H1 (cell line): ENCODE measurements at regions of chr16 and their contacts with region 1.

Region 1: DNA sequence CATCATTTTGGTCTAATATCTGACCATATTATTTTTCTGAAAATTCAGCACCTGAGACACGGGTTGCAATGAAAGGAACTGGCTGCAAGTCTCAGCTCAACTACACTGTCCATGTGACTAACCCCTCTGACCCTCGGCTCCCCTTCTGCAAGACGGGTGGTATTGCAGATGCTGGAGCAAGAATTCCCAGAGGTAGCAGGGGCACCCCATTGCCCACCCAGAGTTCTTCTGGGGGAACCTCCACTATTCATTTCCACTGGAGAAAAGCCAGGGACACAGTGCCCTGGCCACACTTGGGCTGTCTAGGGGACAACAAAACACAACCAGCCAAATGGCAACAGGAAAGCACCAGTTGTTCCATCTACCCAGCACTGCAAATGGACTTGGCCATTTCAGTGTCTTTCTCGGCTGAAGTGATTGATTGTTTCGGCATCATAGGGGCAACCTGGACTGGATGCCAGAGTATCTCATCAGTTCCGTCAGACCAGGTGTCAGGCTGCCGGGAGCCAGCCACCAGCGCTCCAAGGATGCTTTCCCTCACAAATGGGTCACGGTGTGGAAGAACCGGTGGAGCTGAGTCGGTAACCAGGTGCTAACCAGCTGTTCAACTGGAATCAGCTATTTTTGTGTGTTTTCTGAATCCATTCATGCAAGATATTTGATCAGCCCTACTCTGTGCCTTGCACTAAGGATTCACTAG is 58.1 kb downstream of the C16orf78 start:
- DNase-seq: no peak
- H3K4me3 ChIP-seq: no peak overlapping the region
- H3K27ac ChIP-seq: no peak overlapping the region
- H3K4me1 ChIP-seq: no peaks in the 10 kb centered on the region
- H3K27me3 ChIP-seq: no peaks in the 10 kb centered on the region
- CTCF ChIP-seq: peak in 2 of 3 experiments; percentile 2 to 22; a peak in 2 of 4 replicates
- EP300 ChIP-seq: no peak
- POLR2A ChIP-seq: no peak
- RAD21 ChIP-seq: no peak

Region 2: GRCh38 chr16:49464877-49465504 is 33.2 kb after region 1 on chr16:
- CTCF ChIA-PET with region 1: interaction called, 10 read pairs
- POLR2A ChIA-PET with region 1: no interaction called
- DNase-seq: peak in 1 of 2 experiments; percentile 88
- H3K4me3 ChIP-seq: peak overlapping the region; percentile 38 to 65 (median 53)
- H3K27ac ChIP-seq: no peak overlapping the region
- H3K4me1 ChIP-seq: peaks cover 0 to 3% (median 1%) of the 10 kb centered on the region in 4 experiments; a peak in 4 of 7 replicates
- H3K27me3 ChIP-seq: peaks cover 0 to 15% (median 12%) of the 10 kb centered on the region in 4 experiments; a peak in 6 of 7 replicates
- CTCF ChIP-seq: peak; percentile 78 to 81 (median 79)
- EP300 ChIP-seq: no peak
- POLR2A ChIP-seq: peak in 1 of 2 experiments; percentile 49; a peak in 1 of 3 replicates
- RAD21 ChIP-seq: peak; percentile 29 to 62; a peak in 2 of 4 replicates

Region 3: DNA sequence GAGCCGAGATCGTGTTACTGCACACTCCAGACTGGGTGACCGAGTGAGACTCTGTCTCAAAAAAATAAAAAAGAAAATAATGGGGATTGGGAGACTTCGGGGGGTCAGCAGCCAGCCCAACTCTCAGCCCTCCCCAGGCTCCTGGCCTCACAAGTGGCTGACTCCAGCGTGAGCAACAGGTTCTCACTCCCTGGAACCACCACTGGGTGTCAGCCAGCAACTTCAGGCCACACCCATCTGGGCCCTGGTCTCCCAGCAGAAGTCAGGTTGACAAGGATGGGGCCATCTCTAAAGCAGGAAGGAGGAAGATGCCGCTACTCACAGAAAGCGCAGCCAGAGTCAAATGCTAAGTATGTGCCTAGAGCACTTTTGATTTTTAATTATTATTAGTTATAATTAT is 81.3 kb after region 1 on chr16:
- CTCF ChIA-PET with region 1: no interaction called
- POLR2A ChIA-PET with region 1: no interaction called
- DNase-seq: no peak
- H3K4me3 ChIP-seq: no peak overlapping the region
- H3K27ac ChIP-seq: no peak overlapping the region
- H3K4me1 ChIP-seq: no peaks in the 10 kb centered on the region
- H3K27me3 ChIP-seq: no peaks in the 10 kb centered on the region
- CTCF ChIP-seq: peak; percentile 53 to 61 (median 61)
- EP300 ChIP-seq: no peak
- POLR2A ChIP-seq: no peak
- RAD21 ChIP-seq: peak; percentile 65 to 77